ENCODE measurements at regions of chr4 and their contacts with region 1.

Region 1: GRCh38 chr4:25234390-25235370 is 847 bp downstream of the PI4K2B start:
- DNase-seq: peak; percentile 42
- H3K4me3 ChIP-seq: peak overlapping the region; percentile 68 to 94 (median 90)
- H3K27ac ChIP-seq: peak overlapping the region; percentile 96 to 99 (median 98)
- H3K4me1 ChIP-seq: peaks cover 7 to 27% (median 12%) of the 10 kb centered on the region in 4 donors
- H3K27me3 ChIP-seq: no peaks in the 10 kb centered on the region
- CTCF ChIP-seq: peak; percentile 48 to 76 (median 54)
- EP300 ChIP-seq: no peak
- POLR2A ChIP-seq: no peak

Region 2: DNA sequence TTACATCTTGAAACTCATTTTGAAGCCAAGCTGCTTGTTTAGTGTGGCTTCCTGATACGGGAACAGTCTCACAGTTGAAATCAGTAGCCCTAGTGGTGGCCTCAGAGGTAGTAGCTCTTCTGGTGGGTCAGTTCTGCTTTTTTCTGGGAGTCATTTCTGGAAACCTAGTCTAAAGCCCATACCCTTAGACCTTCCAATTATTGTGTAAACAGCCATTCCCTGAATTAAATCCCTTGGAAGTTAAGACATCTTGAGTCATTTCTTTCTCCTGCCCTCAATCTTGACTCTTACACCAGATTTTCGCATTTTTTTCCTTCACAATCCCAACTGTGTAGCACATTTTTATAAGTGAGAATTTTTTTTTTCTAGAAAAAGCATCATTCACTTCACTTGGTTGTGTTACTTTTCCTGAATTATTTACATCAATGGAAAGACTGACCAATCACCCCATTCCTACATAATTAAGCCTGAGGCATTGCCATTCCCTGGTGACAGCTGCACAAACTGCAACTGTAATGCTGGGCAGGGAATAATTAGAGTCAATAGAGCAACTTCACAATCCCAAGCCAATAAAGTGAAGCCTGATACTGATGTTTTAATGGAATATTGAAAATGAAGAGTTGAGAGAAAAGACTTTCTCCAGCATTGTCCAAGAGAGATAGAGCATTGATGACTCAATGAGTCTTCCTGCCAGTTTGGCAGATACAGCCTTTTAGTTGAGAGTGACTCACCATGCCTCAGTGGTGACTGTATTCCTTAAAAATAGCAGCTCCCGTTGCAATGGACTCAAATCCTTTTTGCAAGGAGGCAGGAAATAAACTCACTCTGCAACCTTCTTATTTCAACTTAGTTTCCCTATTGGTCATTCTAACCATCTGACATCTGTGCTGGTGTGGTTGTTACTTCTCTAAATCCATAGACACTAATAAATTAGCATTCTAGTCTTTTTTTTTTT is 61.4 kb before region 1 on chr4:
- in situ Hi-C with region 1: no loop called
- intact Hi-C with region 1: loop called (anchors 10 kb)
- DNase-seq: no peak
- H3K4me3 ChIP-seq: no peak overlapping the region
- H3K27ac ChIP-seq: peak overlapping the region; percentile 45 to 69 (median 60)
- H3K4me1 ChIP-seq: peaks cover 0 to 13% (median 8%) of the 10 kb centered on the region in 4 donors
- H3K27me3 ChIP-seq: no peaks in the 10 kb centered on the region
- CTCF ChIP-seq: no peak
- EP300 ChIP-seq: no peak
- POLR2A ChIP-seq: no peak

Region 3: GRCh38 chr4:25299480-25300188 is 65.0 kb after region 1 on chr4:
- in situ Hi-C with region 1: no loop called
- intact Hi-C with region 1: loop called (anchors 2 kb)
- DNase-seq: peak; percentile 51
- H3K4me3 ChIP-seq: peak overlapping the region in 1 of 4 donors; percentile 2
- H3K27ac ChIP-seq: peak overlapping the region in 3 of 4 donors; percentile 36 to 66 (median 55)
- H3K4me1 ChIP-seq: no peaks in the 10 kb centered on the region
- H3K27me3 ChIP-seq: no peaks in the 10 kb centered on the region
- CTCF ChIP-seq: no peak
- EP300 ChIP-seq: no peak
- POLR2A ChIP-seq: no peak